ENCODE measurements at regions of chr2 and their contacts with region 1.

Region 1: DNA sequence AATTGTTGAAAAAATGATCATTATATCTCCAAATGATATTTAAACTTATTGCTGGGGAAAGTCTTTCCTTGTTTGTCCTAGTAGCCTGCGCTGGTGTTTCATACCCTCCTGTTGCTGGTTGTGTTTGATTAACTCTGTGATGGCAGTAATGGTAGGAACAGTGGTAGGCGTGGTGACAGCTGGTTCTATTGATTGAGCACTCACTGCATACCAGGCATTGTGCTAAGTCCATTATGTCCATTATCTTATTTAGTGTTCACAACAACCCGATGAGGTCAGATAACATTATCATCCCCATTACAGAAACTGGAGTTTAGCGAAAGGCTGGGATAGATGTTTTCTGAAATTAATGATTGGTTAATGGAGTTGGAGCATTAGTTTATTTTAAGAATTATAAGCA is 77.8 kb upstream of the STON1 start:
- DNase-seq: no peak
- ATAC-seq: no peak
- H3K4me3 Mint-ChIP-seq: no peak overlapping the region
- H3K27ac Mint-ChIP-seq: no peak overlapping the region
- H3K4me1 Mint-ChIP-seq: peaks cover 17% of the 10 kb centered on the region
- H3K27me3 Mint-ChIP-seq: no peaks in the 10 kb centered on the region
- CTCF ChIP-seq: no peak

Region 2: GRCh38 chr2:48471048-48471474 is 19.0 kb after region 1 on chr2:
- CTCF ChIA-PET with region 1: interaction called, 10 read pairs
- POLR2A ChIA-PET with region 1: no interaction called
- DNase-seq: no peak
- ATAC-seq: peak; percentile 93
- H3K4me3 Mint-ChIP-seq: no peak overlapping the region
- H3K27ac Mint-ChIP-seq: peak overlapping the region; percentile 97
- H3K4me1 Mint-ChIP-seq: peaks cover 10% of the 10 kb centered on the region
- H3K27me3 Mint-ChIP-seq: no peaks in the 10 kb centered on the region
- CTCF ChIP-seq: peak; percentile 72

Region 3: GRCh38 chr2:48488545-48488944 is 36.4 kb after region 1 on chr2:
- CTCF ChIA-PET with region 1: no interaction called
- POLR2A ChIA-PET with region 1: no interaction called
- DNase-seq: no peak
- ATAC-seq: no peak
- H3K4me3 Mint-ChIP-seq: no peak overlapping the region
- H3K27ac Mint-ChIP-seq: no peak overlapping the region
- H3K4me1 Mint-ChIP-seq: no peaks in the 10 kb centered on the region
- H3K27me3 Mint-ChIP-seq: no peaks in the 10 kb centered on the region
- CTCF ChIP-seq: no peak

Measured in WTC11 (cell line).